Endothelial cell of umbilical vein (primary cell): ENCODE measurements at regions of chr5 and their contacts with region 1.

Region 1: GRCh38 chr5:109865637-109866036 is 175.9 kb downstream of the MAN2A1 start:
- DNase-seq: peak; percentile 96
- H3K4me3 ChIP-seq: no peak overlapping the region
- H3K27ac ChIP-seq: peak overlapping the region; percentile 79
- H3K4me1 ChIP-seq: peaks cover 29% of the 10 kb centered on the region
- H3K27me3 ChIP-seq: no peaks in the 10 kb centered on the region
- CTCF ChIP-seq: no peak
- POLR2A ChIP-seq: peak; percentile 38

Region 2: GRCh38 chr5:109759306-109759705 is 106.3 kb before region 1 on chr5:
- CTCF ChIA-PET with region 1: no interaction called
- POLR2A ChIA-PET with region 1: no interaction called
- dilution Hi-C with region 1: no loop called
- intact Hi-C with region 1: loop called (anchors 1 kb)
- DNase-seq: peak; percentile 89
- H3K4me3 ChIP-seq: peak overlapping the region in 1 of 3 experiments; percentile 32
- H3K27ac ChIP-seq: peak overlapping the region; percentile 67
- H3K4me1 ChIP-seq: peaks cover 10% of the 10 kb centered on the region
- H3K27me3 ChIP-seq: no peaks in the 10 kb centered on the region
- CTCF ChIP-seq: no peak
- POLR2A ChIP-seq: no peak

Region 3: DNA sequence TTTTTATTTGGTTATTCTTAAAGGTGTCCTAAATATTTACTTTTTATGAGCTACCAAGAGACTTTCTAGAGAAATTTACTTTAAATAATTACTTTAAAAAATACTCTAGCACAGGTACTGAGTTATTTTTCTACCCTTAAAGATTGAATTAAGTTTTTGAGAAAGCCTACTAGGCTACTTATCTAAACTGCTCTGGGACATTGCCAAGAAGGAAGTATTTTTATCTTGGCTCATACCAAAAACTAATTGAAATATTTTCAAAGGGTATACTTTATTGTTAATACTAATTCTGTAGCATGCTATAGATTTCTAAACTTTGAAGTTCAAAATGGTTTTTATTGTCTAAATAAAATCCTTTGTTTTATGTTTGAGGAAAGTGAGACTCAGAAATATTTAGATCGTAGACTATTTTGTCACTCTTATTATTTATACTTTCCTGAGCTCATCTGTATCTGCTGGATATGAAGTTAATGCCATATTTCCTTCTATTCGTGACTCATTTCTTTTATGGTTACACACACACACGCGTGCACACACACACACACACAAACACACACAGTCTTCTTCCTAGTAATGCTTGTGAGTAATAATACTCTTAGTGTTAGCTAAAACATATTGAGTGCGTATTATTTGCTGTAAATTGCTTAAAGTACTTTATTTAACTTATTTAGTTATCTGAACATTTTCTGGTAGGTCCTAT is 86.5 kb before region 1 on chr5:
- CTCF ChIA-PET with region 1: no interaction called
- POLR2A ChIA-PET with region 1: no interaction called
- dilution Hi-C with region 1: no loop called
- intact Hi-C with region 1: loop called (anchors 1 kb)
- DNase-seq: peak; percentile 85
- H3K4me3 ChIP-seq: peak overlapping the region in 1 of 3 experiments; percentile 40
- H3K27ac ChIP-seq: peak overlapping the region; percentile 60
- H3K4me1 ChIP-seq: peaks cover 21% of the 10 kb centered on the region
- H3K27me3 ChIP-seq: no peaks in the 10 kb centered on the region
- CTCF ChIP-seq: no peak
- POLR2A ChIP-seq: no peak

Region 4: GRCh38 chr5:109844148-109844547 is 21.5 kb before region 1 on chr5:
- CTCF ChIA-PET with region 1: no interaction called
- POLR2A ChIA-PET with region 1: no interaction called
- dilution Hi-C with region 1: no loop called
- intact Hi-C with region 1: no loop called
- DNase-seq: no peak
- H3K4me3 ChIP-seq: no peak overlapping the region
- H3K27ac ChIP-seq: no peak overlapping the region
- H3K4me1 ChIP-seq: peaks cover 2% of the 10 kb centered on the region
- H3K27me3 ChIP-seq: no peaks in the 10 kb centered on the region
- CTCF ChIP-seq: peak in 1 of 2 donors; percentile 16
- POLR2A ChIP-seq: no peak